ENCODE measurements at regions of chr3 and their contacts with region 1.

Region 1: DNA sequence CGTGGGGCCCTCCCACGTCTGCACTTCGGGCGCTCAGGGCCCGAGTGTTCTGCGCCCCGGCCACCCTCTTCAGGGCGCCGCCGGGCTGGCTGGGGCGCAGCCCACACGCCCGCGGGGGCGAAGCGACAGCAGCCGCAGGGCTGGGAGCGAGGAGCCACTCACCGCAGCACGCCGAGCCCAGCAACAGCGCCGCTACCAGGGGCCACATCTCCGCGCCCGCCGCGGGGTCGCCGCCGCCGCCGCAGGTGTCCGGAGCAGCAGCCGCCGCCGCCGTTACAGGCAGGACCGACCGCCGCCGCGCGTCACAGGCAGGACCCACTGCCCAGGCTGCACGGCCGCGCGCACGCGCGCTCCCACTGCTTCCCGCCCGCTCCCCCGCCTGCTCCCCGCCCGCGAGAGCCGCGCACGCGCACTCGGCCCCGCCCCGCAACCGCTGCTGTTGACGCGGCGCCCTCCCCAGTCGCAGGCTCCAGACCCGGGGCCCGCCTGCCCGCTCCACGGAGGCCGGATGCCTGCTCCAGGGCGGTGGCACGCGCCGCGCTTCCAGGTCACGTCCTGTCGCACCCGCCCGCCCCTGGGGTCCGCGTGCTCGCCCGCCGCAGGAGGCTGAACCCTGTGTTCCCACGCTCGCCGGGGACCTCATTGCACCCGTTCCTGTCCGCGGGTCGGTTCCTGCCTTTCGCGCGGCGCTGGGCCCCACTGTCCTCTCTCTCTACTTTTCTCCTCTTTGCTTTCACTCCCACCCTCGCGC is at the start of gene CD47:
- DNase-seq: peak; percentile 96 to 99
- ATAC-seq: peak; percentile 97
- H3K4me3 ChIP-seq: peak within 1 kb of the TSS; percentile 73 to 80
- H3K27ac ChIP-seq: peak within 1 kb of the TSS in 1 of 2 donors; percentile 60
- H3K4me1 ChIP-seq: no peaks in the 10 kb centered on the region
- H3K27me3 ChIP-seq: no peaks in the 10 kb centered on the region
- total RNA-seq, gene CD47: 79.0 to 96.7 TPM

Region 2: DNA sequence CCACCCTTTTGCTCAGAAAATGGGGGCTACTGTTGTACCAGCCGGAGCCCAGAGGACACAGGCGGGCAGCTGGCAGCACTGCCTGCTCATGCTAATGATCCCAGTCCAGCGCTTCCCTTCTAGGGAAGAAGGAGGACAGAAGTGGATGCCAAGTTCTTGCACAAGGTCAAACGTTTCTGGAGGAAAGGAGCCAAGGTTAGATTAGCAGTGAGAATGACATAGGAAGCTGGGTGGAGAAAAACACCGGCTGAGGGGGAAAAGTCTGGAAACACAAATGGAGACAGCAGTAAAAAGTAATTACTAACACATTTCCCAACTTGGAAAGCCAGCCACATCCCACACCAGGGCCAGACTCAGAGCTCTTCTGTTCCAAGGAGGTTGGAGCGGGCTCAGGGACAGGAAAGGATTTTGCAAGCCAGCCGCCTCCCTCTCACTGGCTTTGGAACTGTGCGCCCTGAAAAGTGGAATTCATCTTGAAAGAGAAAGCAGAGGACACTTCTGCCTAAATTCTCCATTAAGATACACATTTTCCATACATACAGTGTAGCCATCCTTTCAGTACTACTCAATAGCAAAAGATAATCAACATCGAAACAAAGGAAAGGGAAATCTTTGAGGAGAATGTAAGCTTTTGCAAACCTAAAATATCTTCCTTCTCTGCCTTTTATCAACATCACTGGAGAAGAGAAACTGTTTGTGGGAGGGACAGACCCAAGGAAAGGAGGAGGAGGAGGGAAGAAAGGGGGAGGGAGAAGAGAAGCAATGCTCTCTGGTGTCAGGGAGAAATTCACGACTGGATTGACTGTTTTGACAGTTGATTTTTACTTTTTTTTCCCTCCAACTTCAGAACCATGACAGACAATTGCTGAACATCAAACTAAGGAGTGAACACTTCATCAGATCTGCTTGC is 133.6 kb before region 1 on chr3:
- intact Hi-C with region 1: loop called in 1 of 2 experiments (anchors 5 kb)
- DNase-seq: peak; percentile 85 to 87
- ATAC-seq: peak; percentile 95
- H3K4me3 ChIP-seq: no peak overlapping the region
- H3K27ac ChIP-seq: peak overlapping the region; percentile 79 to 94
- H3K4me1 ChIP-seq: peaks cover 2 to 13% of the 10 kb centered on the region in 2 donors
- H3K27me3 ChIP-seq: no peaks in the 10 kb centered on the region

Region 3: DNA sequence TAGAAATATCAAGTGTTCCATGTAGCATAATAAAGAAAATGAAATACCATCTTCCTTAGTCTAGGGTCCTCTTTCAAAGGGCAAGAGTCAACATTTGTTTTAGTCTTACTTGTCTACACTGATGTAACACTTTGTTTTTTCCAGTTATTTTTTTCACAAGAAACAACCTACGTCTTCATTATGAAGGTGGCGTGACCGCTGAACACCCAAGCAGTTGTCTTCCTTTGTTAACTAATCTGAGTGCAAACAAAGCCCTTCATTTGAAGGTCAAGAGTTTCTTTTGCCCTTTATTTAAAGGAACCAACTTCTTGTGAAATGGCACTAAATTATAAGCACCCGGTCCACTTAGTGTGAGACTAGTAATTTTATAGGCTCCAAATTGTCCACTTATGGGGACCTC is 73.3 kb before region 1 on chr3:
- intact Hi-C with region 1: no loop called
- DNase-seq: no peak
- ATAC-seq: no peak
- H3K4me3 ChIP-seq: no peak overlapping the region
- H3K27ac ChIP-seq: no peak overlapping the region
- H3K4me1 ChIP-seq: no peaks in the 10 kb centered on the region
- H3K27me3 ChIP-seq: no peaks in the 10 kb centered on the region

Region 4: DNA sequence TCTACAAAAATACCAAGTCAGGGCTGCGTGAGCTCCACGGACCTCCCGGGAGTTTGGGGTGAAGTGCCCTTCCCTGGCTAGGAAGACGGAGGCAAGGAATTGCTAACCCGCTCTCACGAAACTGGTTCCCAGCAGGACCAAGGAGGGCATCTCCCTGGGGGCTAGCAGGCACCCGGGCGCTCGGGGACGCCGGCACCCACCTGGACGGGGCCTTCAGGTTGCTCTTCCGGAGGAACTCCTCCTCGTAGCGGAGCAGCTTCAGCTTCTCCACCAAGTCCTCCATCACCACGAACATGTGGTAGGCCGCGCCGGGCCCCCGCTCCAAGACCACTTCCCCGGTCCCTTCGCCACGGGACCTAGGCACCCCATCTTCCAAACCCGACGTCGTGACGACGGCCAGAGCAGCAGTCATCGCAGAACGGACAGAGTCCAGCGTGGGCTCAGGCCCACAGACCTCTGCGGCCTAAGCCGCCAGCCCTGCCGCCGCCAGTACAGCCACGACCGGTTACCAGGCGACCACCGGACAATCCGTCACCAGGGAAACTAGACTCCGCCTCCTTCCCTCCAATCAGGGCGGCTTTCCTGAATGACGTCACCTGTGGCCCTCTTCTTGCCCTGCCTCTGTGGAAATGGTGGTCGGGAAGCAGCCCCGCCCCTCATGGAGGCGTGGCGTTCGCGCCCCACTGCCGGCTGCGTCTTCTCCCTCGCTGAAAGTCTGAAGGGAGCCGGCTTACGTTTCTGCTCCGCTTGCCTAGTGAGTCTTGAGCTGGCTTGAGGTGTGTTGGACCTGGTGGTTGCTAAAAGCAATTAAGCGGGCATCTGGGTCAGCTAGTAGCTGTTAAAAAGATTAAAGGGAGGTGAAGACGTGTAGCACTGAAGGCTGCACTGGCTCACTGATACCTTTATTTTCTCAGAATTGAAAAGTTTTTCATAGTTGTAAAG is 131.3 kb after region 1 on chr3 and contains the start of gene IFT57:
- intact Hi-C with region 1: loop called in 1 of 2 experiments (anchors 10 kb)
- DNase-seq: peak; percentile 97 to 98
- ATAC-seq: peak; percentile 99
- H3K4me3 ChIP-seq: peak within 1 kb of the TSS; percentile 83 to 85
- H3K27ac ChIP-seq: peak within 1 kb of the TSS; percentile 63 to 74
- H3K4me1 ChIP-seq: peaks cover 0 to 13% of the 10 kb centered on the region in 2 donors
- H3K27me3 ChIP-seq: no peaks in the 10 kb centered on the region
- total RNA-seq, gene IFT57: 38.3 to 38.5 TPM

Region 5: DNA sequence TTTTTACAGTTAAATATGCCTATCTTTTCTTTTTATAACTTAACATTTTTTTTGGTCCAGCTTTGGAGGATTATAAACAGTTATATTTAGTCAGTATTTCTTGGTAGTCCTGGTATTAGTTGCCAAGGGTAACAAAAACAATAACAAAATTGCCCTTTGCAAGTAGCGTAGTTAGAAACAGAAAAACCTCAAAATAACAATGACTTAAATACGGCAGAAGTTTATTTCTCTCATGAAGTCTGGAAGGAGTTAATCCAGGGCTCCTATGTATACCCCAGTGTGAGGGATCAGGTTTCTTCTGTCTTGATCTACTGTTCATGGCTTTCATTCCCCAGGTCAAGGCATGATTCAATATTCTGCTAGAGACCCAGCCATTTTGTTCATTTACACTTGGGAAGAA is 433.7 kb after region 1 on chr3:
- intact Hi-C with region 1: no loop called
- DNase-seq: no peak
- ATAC-seq: peak; percentile 34
- H3K4me3 ChIP-seq: no peak overlapping the region
- H3K27ac ChIP-seq: no peak overlapping the region
- H3K4me1 ChIP-seq: peaks cover 0 to 8% of the 10 kb centered on the region in 2 donors
- H3K27me3 ChIP-seq: no peaks in the 10 kb centered on the region